T-cell (primary cell): ENCODE measurements at regions of chr1 and their contacts with region 1.

Region 1: GRCh38 chr1:225999227-225999911 is at the start of gene SDE2:
- DNase-seq: peak; percentile 98 to 100 (median 100)
- ATAC-seq: peak; percentile 80 to 95 (median 90)
- H3K4me3 ChIP-seq: peak within 1 kb of the TSS; percentile 88 to 99
- H3K4me3 Mint-ChIP-seq: peak within 1 kb of the TSS; percentile 92 to 100 (median 100)
- H3K27ac ChIP-seq: peak within 1 kb of the TSS; percentile 99
- H3K27ac Mint-ChIP-seq: peak within 1 kb of the TSS; percentile 100
- H3K4me1 ChIP-seq: peaks cover 61 to 65% of the 10 kb centered on the region in 2 experiments
- H3K4me1 Mint-ChIP-seq: peaks cover 82 to 87% (median 86%) of the 10 kb centered on the region in 3 donors
- H3K27me3 ChIP-seq: no peaks in the 10 kb centered on the region
- H3K27me3 Mint-ChIP-seq: no peaks in the 10 kb centered on the region
- total RNA-seq, gene SDE2: 19.6 to 36.1 (median 21.8) TPM

Region 2: DNA sequence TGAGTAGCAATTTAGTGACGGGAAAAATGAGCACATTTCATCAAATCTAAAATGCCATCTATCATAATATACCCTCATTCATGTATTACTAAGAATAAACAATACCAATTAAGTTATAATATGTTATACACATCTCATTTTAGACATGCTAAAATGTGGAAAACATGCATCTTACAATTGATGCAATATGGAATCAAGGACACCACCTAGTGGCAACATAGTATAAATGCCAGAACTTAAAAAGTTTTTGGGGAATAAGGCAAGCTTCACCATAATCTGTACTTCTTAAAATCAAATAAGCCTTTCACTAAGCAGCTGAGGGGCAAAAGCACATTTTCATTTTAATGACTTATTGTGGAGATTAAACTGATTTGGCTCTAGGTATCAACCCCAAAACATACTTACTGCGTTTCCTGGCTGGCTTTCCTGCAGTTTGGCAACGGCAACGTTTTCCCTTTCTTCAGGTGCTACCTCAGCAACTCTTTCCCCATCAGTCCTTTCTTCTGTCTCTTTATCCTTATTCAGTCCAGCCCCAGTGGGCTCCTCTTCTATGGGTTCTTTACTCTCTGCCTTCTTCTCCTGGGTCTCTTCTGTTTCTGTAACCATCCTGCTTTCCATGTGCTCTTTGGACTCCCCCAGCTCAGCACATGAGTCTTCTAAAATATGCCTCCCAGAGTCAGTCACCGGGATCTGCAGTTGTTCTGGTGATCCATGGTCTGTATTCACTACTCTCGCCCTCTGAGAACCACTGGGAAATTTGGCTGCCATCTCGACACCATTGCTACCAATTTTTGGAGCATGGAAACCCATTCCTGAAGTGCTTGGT is 11.7 kb before region 1 on chr1:
- CTCF ChIA-PET with region 1: interaction called, 3 to 19 read pairs
- POLR2A ChIA-PET with region 1: interaction called, 5 to 7 read pairs
- DNase-seq: peak in 1 of 35 experiments; percentile 66
- ATAC-seq: peak in 2 of 4 experiments; percentile 48 to 61
- H3K4me3 ChIP-seq: no peak overlapping the region
- H3K4me3 Mint-ChIP-seq: no peak overlapping the region
- H3K27ac ChIP-seq: no peak overlapping the region
- H3K27ac Mint-ChIP-seq: peak overlapping the region in 1 of 2 donors; percentile 1
- H3K4me1 ChIP-seq: peaks cover 0 to 6% of the 10 kb centered on the region in 2 experiments
- H3K4me1 Mint-ChIP-seq: peaks cover 28 to 37% (median 34%) of the 10 kb centered on the region in 3 donors
- H3K27me3 ChIP-seq: no peaks in the 10 kb centered on the region
- H3K27me3 Mint-ChIP-seq: no peaks in the 10 kb centered on the region

Region 3: GRCh38 chr1:226738421-226738994 is 739.1 kb after region 1 on chr1:
- CTCF ChIA-PET with region 1: no interaction called
- POLR2A ChIA-PET with region 1: interaction called in 1 of 2 experiments, 10 read pairs
- DNase-seq: peak in 20 of 35 experiments; percentile 27 to 61 (median 45)
- ATAC-seq: peak; percentile 1 to 32 (median 24)
- H3K4me3 ChIP-seq: peak overlapping the region; percentile 95 to 98
- H3K4me3 Mint-ChIP-seq: peak overlapping the region; percentile 85 to 95 (median 90)
- H3K27ac ChIP-seq: peak overlapping the region; percentile 90
- H3K27ac Mint-ChIP-seq: peak overlapping the region; percentile 96 to 98
- H3K4me1 ChIP-seq: peaks cover 36 to 42% of the 10 kb centered on the region in 2 experiments
- H3K4me1 Mint-ChIP-seq: peaks cover 36 to 49% (median 45%) of the 10 kb centered on the region in 3 donors
- H3K27me3 ChIP-seq: no peaks in the 10 kb centered on the region
- H3K27me3 Mint-ChIP-seq: no peaks in the 10 kb centered on the region